Esophagus squamous epithelium (tissue), 5 donors: ENCODE measurements at regions of chr11 and their contacts with region 1.

Region 1: DNA sequence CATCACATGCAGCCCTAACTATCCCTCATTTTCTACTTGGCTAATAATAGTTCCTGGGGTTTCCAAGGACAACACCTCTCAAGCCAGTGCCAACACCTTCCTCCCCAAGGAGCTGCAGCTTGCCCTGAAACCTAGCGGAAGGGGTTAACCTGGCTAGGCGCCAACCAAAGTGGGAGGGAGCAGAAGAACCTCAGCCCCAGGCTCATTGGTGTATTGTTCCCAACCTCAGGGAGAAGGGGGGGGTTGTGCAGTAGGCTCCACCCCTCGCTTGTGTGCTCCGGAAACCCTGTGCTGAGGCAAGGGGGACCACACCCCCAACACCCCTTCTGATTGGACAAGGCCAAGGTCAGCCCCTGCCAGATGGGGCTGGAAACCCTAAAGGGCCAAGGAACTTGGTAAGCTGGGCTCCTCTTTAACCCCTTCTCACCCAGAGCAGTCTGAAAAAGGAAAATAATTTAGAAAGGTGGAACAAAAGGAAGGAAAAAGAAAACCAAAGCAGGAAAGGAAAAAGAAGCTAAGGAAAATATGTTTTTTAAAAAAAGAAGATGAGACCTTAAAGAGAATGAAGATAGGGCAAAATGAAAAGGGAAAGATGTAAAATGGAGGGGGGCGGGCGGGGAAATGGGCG is 2.5 kb downstream of the MTA2 start:
- DNase-seq: peak; percentile 89
- H3K4me3 ChIP-seq: peak overlapping the region; percentile 89 to 99 (median 94)
- H3K27ac ChIP-seq: peak overlapping the region; percentile 95 to 99 (median 98)
- H3K4me1 ChIP-seq: peaks cover 27 to 60% (median 33%) of the 10 kb centered on the region in 3 donors
- H3K27me3 ChIP-seq: no peaks in the 10 kb centered on the region
- CTCF ChIP-seq: peak in 1 of 6 experiments; percentile 17
- POLR2A ChIP-seq: no peak

Region 2: GRCh38 chr11:62645956-62646824 is 47.0 kb after region 1 on chr11 and contains the start of gene GANAB:
- intact Hi-C with region 1: no loop called
- DNase-seq: peak; percentile 98
- H3K4me3 ChIP-seq: peak within 1 kb of the TSS; percentile 76 to 96 (median 94)
- H3K27ac ChIP-seq: peak within 1 kb of the TSS; percentile 92 to 96 (median 94)
- H3K4me1 ChIP-seq: peaks cover 18 to 44% (median 20%) of the 10 kb centered on the region in 3 donors
- H3K27me3 ChIP-seq: no peaks in the 10 kb centered on the region
- CTCF ChIP-seq: no peak
- POLR2A ChIP-seq: peak in 3 of 4 donors; percentile 71 to 82 (median 74)
- total RNA-seq, gene GANAB: 90.8 to 97.2 (median 95.0) TPM

Region 3: DNA sequence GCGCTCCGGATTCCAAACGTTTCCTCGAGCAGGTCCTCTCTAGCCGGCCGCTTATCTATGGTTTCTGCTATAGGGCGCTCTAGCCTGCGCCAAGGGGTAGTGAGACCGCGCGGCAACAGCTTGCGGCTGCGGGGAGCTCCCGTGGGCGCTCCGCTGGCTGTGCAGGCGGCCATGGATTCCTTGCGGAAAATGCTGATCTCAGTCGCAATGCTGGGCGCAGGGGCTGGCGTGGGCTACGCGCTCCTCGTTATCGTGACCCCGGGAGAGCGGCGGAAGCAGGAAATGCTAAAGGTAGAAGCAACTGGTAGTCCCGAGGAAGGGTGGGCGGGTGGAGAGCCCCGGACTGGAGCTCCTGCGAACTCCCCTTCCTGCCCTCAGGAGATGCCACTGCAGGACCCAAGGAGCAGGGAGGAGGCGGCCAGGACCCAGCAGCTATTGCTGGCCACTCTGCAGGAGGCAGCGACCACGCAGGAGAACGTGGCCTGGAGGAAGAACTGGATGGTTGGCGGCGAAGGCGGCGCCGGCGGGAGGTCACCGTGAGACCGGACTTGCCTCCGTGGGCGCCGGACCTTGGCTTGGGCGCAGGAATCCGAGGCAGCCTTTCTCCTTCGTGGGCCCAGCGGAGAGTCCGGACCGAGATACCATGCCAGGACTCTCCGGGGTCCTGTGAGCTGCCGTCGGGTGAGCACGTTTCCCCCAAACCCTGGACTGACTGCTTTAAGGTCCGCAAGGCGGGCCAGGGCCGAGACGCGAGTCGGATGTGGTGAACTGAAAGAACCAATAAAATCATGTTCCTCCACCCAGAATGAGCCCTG is 72.6 kb after region 1 on chr11 and contains the starts of genes LBHD1 and UQCC3:
- intact Hi-C with region 1: loop called (anchors 5 kb)
- DNase-seq: peak; percentile 40
- H3K4me3 ChIP-seq: peak within 1 kb of the TSS; percentile 75 to 96 (median 82)
- H3K27ac ChIP-seq: peak within 1 kb of the TSS; percentile 92 to 95 (median 93)
- H3K4me1 ChIP-seq: peaks cover 26 to 83% (median 38%) of the 10 kb centered on the region in 3 donors
- H3K27me3 ChIP-seq: no peaks in the 10 kb centered on the region
- CTCF ChIP-seq: peak in 1 of 6 experiments; percentile 9
- POLR2A ChIP-seq: peak in 2 of 4 donors; percentile 46 to 67
- total RNA-seq, gene LBHD1: 1.8 to 3.6 (median 2.5) TPM
- total RNA-seq, gene UQCC3: 10.5 to 17.2 (median 12.2) TPM

Region 4: GRCh38 chr11:62687508-62688396 is 88.6 kb after region 1 on chr11:
- intact Hi-C with region 1: no loop called
- DNase-seq: no peak
- H3K4me3 ChIP-seq: peak overlapping the region in 3 of 4 donors; percentile 26 to 58 (median 36)
- H3K27ac ChIP-seq: peak overlapping the region; percentile 19 to 75 (median 62)
- H3K4me1 ChIP-seq: peaks cover 0 to 32% (median 8%) of the 10 kb centered on the region in 3 donors
- H3K27me3 ChIP-seq: peaks cover 0 to 10% (median 0%) of the 10 kb centered on the region in 4 donors
- CTCF ChIP-seq: no peak
- POLR2A ChIP-seq: no peak

Region 5: GRCh38 chr11:62705880-62706849 is 107.0 kb after region 1 on chr11:
- intact Hi-C with region 1: no loop called
- DNase-seq: peak; percentile 68
- H3K4me3 ChIP-seq: peak overlapping the region; percentile 57 to 76 (median 71)
- H3K27ac ChIP-seq: peak overlapping the region; percentile 76 to 89 (median 82)
- H3K4me1 ChIP-seq: peaks cover 28 to 58% (median 33%) of the 10 kb centered on the region in 3 donors
- H3K27me3 ChIP-seq: no peaks in the 10 kb centered on the region
- CTCF ChIP-seq: no peak
- POLR2A ChIP-seq: peak in 2 of 4 donors; percentile 24 to 50